Mammary epithelial cell (primary cell): ENCODE measurements at regions of chr7 and their contacts with region 1.

Region 1: DNA sequence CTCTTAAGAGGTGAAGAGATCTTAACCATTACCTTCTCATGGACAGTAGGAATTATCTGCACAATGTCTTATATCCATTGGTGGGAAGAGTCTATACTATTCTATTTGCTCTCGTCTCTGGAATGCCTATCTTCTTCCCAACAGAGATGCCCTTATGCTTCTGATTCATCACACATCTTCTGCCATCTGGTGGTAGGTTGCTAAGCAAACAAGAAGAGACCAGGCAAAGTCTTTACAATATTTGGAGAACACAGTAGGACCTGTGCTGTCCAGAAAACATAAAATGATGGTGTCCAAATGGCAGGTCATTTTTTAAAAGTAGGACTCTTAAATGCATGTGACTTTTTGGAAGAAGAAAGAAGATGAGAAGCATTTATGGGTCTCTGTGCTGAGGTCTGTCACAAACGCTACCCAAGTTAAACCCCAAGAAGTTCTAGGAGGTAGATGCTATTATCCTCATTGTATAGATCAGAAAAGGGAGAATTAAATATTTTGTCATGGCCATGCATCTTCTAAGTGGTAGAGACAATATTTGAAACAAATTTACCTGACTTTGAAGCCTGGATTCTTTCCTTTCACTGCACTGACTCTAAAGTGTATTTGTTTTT is 67.8 kb upstream of the NXPH1 start:
- DNase-seq: peak; percentile 32
- H3K4me3 ChIP-seq: no peak overlapping the region
- H3K27ac ChIP-seq: no peak overlapping the region
- H3K4me1 ChIP-seq: no peaks in the 10 kb centered on the region
- H3K27me3 ChIP-seq: no peaks in the 10 kb centered on the region
- CTCF ChIP-seq: peak; percentile 29 to 45

Region 2: GRCh38 chr7:8277394-8277982 is 88.1 kb before region 1 on chr7:
- CTCF ChIA-PET with region 1: no interaction called
- dilution Hi-C with region 1: no loop called
- in situ Hi-C with region 1: no loop called
- intact Hi-C with region 1: loop called (anchors 1 kb)
- DNase-seq: peak; percentile 19
- H3K4me3 ChIP-seq: no peak overlapping the region
- H3K27ac ChIP-seq: no peak overlapping the region
- H3K4me1 ChIP-seq: no peaks in the 10 kb centered on the region
- H3K27me3 ChIP-seq: peaks cover 2% of the 10 kb centered on the region
- CTCF ChIP-seq: peak; percentile 18 to 41

Region 3: DNA sequence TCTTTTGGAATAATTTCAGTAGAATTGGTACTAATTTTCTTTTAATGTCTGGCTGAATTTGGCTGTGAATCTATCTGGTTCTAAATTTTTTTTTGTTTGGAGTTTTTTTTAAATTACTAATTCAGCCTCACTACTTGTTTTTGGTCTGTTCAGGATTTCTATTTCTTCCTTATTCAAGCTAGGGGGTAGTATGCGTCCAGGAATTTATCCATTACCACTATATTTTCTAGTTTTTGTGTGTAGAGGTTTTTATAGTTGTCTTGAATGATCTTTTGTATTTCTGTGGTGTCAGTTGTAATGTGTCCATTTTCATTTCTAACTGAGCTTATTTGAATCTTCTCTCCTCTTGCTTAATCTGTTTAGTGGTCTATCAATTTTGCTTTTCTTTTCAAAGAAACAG is 54.7 kb before region 1 on chr7:
- CTCF ChIA-PET with region 1: no interaction called
- dilution Hi-C with region 1: no loop called
- in situ Hi-C with region 1: no loop called
- intact Hi-C with region 1: loop called (anchors 5 kb)
- DNase-seq: no peak
- H3K4me3 ChIP-seq: no peak overlapping the region
- H3K27ac ChIP-seq: no peak overlapping the region
- H3K4me1 ChIP-seq: no peaks in the 10 kb centered on the region
- H3K27me3 ChIP-seq: no peaks in the 10 kb centered on the region
- CTCF ChIP-seq: no peak